ENCODE measurements at regions of chr10 and their contacts with region 1.

Region 1: DNA sequence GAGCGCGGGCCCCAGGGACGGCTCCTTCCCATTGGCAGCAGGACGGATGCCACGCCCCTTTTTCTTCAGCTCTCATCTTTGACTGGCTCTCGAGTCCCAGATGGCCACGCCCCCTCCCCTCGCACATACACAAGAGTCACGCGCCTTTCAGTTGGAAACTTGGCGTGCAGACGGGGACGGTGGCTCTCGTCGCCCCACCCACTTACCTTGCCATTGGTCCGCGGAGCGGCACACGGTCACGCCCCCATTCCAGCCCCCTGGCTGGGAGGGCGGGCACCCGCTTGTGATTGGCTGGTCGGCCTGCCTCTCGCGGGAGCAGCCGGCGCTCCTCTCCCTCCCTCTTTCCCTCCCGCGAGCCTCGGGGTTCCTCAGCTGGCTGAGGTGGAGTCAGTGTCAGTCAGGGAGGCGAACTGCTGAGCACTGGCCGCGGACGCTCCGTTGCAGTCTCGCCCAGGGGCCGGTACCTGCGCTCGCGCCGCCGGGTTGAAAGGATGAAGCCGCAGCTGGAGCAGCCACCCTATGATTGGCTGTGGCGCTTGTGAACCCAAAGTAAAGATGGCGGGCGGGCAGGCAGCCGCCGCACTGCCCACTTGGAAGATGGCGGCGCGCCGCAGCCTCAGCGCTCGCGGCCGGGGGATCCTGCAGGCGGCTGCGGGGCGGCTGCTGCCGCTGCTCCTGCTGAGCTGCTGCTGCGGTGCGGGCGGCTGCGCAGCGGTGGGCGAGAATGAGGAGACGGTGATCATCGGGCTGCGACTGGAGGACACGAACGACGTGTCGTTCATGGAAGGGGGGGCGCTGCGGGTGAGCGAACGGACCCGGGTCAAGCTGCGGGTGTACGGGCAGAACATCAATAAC is at the start of gene CNNM2:
- DNase-seq: peak; percentile 100
- ATAC-seq: peak; percentile 97 to 98
- total RNA-seq, gene CNNM2: 3.7 to 3.9 TPM

Region 2: DNA sequence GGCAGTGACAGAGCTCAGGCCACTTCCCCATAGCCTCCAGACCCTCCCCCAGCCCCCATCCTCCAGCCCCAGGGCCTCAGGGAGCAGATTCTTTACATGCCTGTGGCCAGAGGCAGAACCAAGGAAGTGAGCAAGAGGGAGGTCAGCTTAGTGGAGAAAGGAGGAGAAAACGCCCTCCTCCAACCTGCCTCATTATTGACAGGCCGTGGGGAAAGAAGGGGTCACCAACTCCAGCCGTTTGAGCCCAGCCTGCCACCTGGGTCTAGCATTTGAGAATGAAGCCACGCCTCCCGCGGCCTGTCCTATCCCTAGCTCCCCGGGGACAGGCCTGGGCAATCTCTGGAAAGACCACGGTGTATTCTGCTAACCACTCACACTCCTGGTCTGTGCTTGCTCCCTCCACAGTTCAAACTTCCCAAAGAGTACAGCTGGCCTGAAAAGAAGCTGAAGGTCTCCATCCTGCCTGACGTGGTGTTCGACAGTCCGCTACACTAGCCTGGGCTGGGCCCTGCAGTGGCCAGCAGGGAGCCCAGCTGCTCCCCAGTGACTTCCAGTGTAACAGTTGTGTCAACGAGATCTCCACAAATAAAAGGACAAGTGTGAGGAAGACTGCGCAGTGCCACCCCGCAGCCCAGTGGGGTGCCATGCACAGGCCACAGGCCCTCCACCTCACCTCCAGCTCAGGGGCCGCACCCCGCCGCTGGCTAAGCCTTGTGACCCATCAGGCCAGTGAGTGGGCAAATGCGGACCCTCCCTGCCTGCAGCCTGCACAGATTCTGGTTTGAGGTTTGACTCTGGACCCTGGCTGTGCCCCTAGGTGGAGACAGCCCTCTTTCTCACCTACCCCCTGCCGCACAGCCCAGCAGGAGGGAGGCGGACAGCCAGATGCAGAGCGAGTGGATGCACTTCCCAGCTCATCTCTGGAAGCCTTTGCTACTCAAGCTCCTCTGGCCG is 288.3 kb before region 1 on chr10:
- intact Hi-C with region 1: no loop called
- DNase-seq: no peak
- ATAC-seq: no peak

Region 3: GRCh38 chr10:102962951-102963755 is 45.0 kb after region 1 on chr10:
- intact Hi-C with region 1: no loop called
- DNase-seq: no peak
- ATAC-seq: no peak

Region 4: GRCh38 chr10:103069453-103070331 is 151.5 kb after region 1 on chr10:
- intact Hi-C with region 1: loop called (anchors 2 to 5 kb)
- DNase-seq: peak; percentile 65
- ATAC-seq: peak; percentile 79 to 82